Tibial artery (tissue), 4 donors: ENCODE measurements at regions of chr3 and their contacts with region 1.

Region 1: DNA sequence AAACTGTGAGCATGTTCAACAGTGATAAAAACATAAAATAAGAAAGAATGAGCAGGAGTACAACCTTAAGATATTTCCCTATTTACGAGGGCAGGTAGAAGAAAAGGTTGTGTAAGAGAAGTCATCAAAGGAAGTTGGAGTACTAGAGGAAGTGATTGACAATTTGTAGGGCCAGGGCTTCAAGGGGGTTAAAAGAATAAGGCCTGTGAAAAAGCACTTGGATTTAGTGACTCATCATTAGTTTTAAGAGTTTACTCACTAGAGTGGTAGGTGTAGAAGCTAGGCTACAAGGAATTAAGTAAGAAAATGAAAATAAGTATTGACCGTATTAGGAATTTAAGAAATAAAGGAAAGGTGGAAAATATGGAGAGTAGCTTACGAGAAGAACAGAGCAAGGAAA is 23.6 kb downstream of the KCNMB3 start:
- DNase-seq: no peak
- H3K4me3 ChIP-seq: no peak overlapping the region
- H3K27ac ChIP-seq: no peak overlapping the region
- H3K4me1 ChIP-seq: no peaks in the 10 kb centered on the region
- H3K27me3 ChIP-seq: no peaks in the 10 kb centered on the region
- CTCF ChIP-seq: no peak

Region 2: GRCh38 chr3:179147873-179148615 is 79.3 kb before region 1 on chr3 and contains the start of gene PIK3CA:
- intact Hi-C with region 1: no loop called
- DNase-seq: peak; percentile 97
- H3K4me3 ChIP-seq: peak within 1 kb of the TSS; percentile 83 to 94
- H3K27ac ChIP-seq: peak within 1 kb of the TSS; percentile 93 to 98
- H3K4me1 ChIP-seq: peaks cover 0 to 36% (median 10%) of the 10 kb centered on the region in 4 donors
- H3K27me3 ChIP-seq: no peaks in the 10 kb centered on the region
- CTCF ChIP-seq: no peak

Region 3: DNA sequence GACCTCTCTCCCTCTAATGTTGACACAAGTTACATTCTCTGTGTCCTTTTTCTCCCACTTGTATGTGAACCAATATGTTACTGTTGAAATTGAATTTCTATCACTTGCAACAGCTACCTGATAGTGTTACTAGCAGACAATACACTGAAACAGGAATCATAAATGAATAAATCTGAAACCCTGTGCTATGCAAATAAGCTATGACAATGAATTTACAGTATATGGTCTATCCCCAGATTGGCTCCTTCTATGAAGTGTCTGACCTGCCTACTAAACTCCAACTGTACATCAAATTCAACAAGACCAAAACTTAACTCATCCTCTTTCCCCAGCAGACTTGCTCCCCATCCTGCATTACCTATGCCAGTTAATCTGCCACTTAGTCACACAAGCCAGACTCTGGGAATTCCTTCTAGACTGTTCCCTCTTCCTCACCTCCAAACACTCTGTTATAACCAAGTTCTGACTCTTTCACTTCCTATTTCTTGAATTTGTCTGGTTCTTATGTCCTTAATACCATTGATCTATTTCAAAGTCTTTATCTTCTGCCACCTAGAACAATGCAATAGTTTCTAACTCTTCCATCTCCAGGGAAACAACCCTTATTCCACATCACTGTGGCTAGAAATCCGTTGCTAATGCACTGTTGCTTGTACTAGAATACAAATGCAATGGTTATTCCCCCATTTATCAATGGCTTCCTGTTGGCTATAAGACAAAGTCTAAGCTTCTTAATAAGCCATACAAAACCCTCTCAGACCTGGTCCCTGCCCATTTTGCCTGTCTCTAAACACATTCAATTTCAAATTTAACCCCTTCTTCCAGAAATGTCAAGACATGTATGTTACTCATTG is 82.1 kb after region 1 on chr3:
- intact Hi-C with region 1: loop called (anchors 10 kb)
- DNase-seq: no peak
- H3K4me3 ChIP-seq: no peak overlapping the region
- H3K27ac ChIP-seq: no peak overlapping the region
- H3K4me1 ChIP-seq: no peaks in the 10 kb centered on the region
- H3K27me3 ChIP-seq: peaks cover 0 to 8% of the 10 kb centered on the region in 2 donors
- CTCF ChIP-seq: no peak